Activated CD4-positive, alpha-beta memory T cell treated with anti-CD3 and anti-CD28 coated beads, Interleukin-2, amount 10 ng/mL, durations not matched to agents 7 days and 5 days (primary cell): ENCODE measurements at regions of chr16 and their contacts with region 1.

Region 1: GRCh38 chr16:12079412-12079965 is 103.0 kb downstream of the SNX29 start:
- DNase-seq: no peak
- H3K4me3 Mint-ChIP-seq: peak overlapping the region; percentile 64
- H3K27ac Mint-ChIP-seq: peak overlapping the region; percentile 99
- H3K4me1 Mint-ChIP-seq: peaks cover 79% of the 10 kb centered on the region
- H3K27me3 Mint-ChIP-seq: peaks cover 1% of the 10 kb centered on the region

Region 2: DNA sequence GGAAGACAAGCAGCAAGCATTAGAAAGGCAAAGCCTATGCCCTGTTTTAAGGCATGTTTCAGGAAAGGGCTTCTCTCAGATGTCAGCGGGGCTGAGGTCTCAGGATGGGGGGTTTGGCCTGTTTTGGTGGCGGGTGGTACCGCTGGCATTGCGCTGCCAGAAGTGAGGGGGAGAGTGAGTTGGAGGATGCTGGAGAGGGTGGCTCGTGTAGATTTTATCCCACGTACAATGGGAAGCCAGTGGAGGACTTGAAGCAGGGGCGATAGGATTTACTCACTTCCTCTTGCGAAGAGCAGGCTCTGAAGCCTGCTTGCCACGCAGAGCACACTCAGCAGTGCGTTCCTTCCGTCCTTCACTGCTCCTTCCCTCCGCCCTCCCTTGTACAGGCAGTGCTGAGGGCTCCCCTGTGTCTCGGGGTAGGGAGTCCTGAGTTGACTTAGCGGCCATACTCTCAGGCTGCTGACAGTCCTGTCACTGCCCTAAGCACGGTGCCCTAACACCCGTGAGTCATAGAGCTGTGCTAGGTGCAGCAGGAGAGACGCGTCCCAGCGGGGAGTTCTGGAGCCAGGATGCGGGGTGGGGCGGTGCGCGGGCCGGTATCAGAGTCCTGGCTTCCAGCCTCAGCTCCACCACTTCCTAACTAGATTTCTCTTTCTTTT is 10.1 kb after region 1 on chr16:
- CTCF ChIA-PET with region 1: interaction called, 72 read pairs
- POLR2A ChIA-PET with region 1: interaction called, 18 read pairs
- DNase-seq: peak; percentile 37
- H3K4me3 Mint-ChIP-seq: peak overlapping the region; percentile 33
- H3K27ac Mint-ChIP-seq: peak overlapping the region; percentile 53
- H3K4me1 Mint-ChIP-seq: peaks cover 17% of the 10 kb centered on the region
- H3K27me3 Mint-ChIP-seq: no peaks in the 10 kb centered on the region

Region 3: GRCh38 chr16:12095275-12096156 is 16.0 kb after region 1 on chr16:
- CTCF ChIA-PET with region 1: interaction called, 72 read pairs
- POLR2A ChIA-PET with region 1: interaction called, 18 read pairs
- DNase-seq: peak; percentile 65
- H3K4me3 Mint-ChIP-seq: no peak overlapping the region
- H3K27ac Mint-ChIP-seq: no peak overlapping the region
- H3K4me1 Mint-ChIP-seq: peaks cover 4% of the 10 kb centered on the region
- H3K27me3 Mint-ChIP-seq: no peaks in the 10 kb centered on the region